AG04449 (cell line): ENCODE measurements at regions of chr17 and their contacts with region 1.

Region 1: DNA sequence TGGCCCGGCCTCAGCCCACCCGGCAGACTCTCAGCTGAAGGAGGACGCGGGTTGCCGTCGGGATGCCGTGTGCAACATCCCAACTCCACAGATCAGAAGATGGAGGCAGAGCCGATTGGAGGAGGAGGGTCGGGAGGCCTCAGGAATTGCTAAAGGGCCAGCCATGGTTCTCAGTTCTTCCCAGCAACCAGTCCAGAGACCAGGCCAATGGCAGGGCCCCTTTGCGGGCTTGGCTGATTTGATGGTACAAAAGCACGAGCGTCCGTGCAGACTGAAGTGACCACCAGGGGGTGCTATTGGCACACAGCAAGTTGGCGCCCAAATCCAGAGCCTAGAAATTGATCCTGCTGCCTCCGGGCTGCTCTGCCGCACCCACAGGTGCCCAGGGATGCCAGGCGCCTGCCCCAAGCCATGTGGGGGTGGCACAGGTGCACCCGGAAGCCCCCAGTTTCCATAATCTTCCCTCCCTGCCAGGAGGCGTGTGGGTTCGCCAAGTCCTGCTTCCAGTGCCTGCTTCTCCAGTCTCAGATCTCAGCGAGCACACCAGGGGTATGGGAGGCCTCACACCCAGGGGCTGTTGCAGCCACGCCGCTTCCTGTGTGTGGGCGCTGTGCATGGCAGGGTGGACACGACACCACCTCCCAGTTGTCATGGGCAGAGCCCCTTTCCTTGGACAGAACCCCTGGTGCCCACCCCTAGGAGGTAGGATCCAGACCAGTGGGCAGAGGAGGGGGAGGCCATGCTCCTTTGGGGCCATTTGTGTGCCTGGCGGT is 7.1 kb upstream of the TEX19 start:
- DNase-seq: peak; percentile 36
- H3K4me3 ChIP-seq: no peak overlapping the region
- CTCF ChIP-seq: peak; percentile 94

Region 2: GRCh38 chr17:82297714-82298537 is 54.0 kb before region 1 on chr17:
- CTCF ChIA-PET with region 1: interaction called, 17 read pairs
- POLR2A ChIA-PET with region 1: no interaction called
- DNase-seq: peak; percentile 63
- H3K4me3 ChIP-seq: peak overlapping the region; percentile 49
- CTCF ChIP-seq: no peak

Region 3: DNA sequence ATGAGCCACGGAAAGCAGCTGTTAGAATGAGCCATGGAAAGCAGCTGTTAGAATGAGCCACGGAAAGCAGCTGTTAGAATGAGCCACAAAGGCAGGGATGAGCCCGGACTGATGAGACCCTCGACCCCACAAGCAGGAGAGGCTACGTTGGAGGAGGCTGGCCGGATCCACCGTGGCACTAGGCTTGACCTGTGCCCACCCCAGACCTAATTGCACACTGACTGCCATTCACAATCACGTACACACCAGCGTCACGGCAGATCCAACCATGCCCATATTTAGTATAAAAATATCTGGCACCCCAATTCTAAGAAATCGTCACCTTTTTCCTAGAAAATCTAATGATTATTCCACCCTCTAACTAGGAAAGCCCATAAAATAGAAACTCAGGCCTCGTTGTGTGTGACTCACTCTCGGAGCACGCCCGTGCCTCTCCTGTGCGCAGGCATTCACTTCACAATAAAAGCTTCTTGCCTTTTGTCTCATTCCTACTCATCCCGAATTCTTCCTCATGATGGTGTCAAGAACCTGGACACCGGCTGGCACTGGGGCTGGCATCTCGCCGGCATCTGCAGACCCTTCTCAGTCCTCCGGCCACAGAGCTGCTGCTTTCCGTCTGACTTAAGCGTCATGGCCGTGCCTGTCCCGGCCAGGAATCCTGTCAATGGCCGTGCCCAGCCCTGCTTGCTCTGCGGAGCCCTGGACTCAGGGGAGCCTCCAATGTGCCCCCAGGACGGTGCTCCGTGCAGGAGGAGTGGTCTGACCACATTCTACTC is 12.9 kb before region 1 on chr17:
- CTCF ChIA-PET with region 1: interaction called, 21 read pairs
- POLR2A ChIA-PET with region 1: no interaction called
- DNase-seq: no peak
- H3K4me3 ChIP-seq: peak overlapping the region; percentile 12; the same call in 1 of the 2 replicates
- CTCF ChIP-seq: no peak

Region 4: GRCh38 chr17:82370471-82371332 is 18.8 kb after region 1 on chr17:
- CTCF ChIA-PET with region 1: interaction called, 18 read pairs
- POLR2A ChIA-PET with region 1: no interaction called
- DNase-seq: no peak
- H3K4me3 ChIP-seq: peak overlapping the region; percentile 29
- CTCF ChIP-seq: no peak

Region 5: GRCh38 chr17:82400830-82401229 is 48.9 kb after region 1 on chr17:
- CTCF ChIA-PET with region 1: interaction called, 25 read pairs
- POLR2A ChIA-PET with region 1: no interaction called
- DNase-seq: no peak
- H3K4me3 ChIP-seq: no peak overlapping the region; the same call in 1 of the 2 replicates
- CTCF ChIP-seq: no peak

Region 6: DNA sequence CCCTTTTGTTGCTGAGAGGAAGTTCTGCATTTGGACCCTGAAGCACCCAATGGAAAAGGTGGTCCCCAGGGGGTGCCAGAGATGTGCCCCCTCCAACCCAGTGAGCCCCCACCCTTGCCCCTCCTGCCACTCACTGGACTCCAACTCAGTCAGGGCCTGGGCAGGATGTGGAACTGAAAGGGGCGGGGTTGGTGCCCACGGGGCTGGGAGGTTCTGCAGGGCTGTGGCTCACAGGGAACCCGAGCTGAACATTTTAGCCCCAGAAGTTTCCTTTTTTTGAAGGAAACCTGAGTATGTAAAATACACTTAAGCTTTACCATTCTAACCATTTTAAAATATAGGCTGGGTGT is 82.3 kb after region 1 on chr17:
- CTCF ChIA-PET with region 1: no interaction called
- POLR2A ChIA-PET with region 1: no interaction called
- DNase-seq: no peak
- H3K4me3 ChIP-seq: no peak overlapping the region
- CTCF ChIP-seq: no peak

Region 7: DNA sequence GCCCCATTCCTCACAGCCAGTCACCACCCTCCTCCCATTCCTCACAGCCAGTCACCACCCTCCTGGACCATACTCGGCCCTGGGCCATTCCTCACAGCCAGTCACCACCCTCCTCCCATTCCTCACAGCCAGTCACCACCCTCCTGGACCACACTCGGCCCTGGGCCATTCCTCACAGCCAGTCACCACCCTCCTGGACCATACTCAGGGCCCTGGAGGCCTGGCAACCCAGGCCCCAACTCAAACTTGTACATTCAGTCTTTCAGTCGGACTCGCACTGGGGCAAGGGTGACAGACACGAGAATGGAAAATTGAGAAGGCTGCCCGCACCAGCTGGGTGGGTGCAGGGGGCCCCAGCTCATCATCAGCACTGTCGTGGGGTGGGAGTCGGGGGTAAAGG is 137.2 kb after region 1 on chr17:
- CTCF ChIA-PET with region 1: no interaction called
- POLR2A ChIA-PET with region 1: no interaction called
- DNase-seq: no peak
- H3K4me3 ChIP-seq: no peak overlapping the region
- CTCF ChIP-seq: no peak